ENCODE measurements at regions of chr1 and their contacts with region 1.

Region 1: DNA sequence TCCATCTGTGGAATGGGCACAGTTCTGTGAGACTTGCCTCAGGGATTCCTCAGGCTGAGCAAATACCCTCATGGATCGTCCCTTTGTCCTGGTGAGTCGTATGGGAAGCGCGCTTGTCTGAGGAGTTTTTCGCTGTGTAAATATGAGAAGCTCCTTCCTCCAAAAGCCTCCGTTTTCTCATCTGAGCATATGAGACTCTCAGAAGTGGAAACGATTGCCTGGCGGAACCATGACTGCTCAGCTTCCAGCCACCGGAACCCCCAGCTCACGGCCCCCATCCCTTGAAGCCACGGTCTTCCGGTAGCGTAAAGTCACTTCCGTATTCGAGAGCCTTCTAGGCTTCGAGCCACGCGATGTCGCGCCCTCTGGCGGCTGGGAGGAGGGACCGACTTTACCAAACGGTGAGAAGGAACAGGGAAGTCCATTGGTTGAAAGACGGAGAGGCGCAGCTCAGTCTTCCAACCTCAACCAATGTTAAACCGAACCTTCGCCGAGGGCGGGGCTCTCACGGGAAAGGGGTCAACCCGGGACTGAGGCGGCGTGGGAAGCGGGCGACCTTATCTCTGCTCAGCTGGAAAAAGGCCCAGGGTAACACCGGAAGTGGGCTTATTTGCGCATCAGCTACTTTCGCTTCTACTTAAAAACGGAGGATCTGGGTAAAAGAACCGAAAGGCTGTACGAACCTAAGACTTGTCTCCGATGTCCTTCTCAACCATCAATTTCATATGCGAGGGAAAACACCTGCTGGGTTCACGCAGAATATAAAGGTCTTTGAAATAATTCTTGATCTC is 46.2 kb downstream of the AZIN2 start:
- DNase-seq: peak; percentile 99
- ATAC-seq: peak; percentile 95
- H3K4me3 Mint-ChIP-seq: peak overlapping the region; percentile 97
- H3K27ac Mint-ChIP-seq: peak overlapping the region; percentile 98
- H3K4me1 Mint-ChIP-seq: peaks cover 40% of the 10 kb centered on the region
- H3K27me3 Mint-ChIP-seq: no peaks in the 10 kb centered on the region

Region 2: DNA sequence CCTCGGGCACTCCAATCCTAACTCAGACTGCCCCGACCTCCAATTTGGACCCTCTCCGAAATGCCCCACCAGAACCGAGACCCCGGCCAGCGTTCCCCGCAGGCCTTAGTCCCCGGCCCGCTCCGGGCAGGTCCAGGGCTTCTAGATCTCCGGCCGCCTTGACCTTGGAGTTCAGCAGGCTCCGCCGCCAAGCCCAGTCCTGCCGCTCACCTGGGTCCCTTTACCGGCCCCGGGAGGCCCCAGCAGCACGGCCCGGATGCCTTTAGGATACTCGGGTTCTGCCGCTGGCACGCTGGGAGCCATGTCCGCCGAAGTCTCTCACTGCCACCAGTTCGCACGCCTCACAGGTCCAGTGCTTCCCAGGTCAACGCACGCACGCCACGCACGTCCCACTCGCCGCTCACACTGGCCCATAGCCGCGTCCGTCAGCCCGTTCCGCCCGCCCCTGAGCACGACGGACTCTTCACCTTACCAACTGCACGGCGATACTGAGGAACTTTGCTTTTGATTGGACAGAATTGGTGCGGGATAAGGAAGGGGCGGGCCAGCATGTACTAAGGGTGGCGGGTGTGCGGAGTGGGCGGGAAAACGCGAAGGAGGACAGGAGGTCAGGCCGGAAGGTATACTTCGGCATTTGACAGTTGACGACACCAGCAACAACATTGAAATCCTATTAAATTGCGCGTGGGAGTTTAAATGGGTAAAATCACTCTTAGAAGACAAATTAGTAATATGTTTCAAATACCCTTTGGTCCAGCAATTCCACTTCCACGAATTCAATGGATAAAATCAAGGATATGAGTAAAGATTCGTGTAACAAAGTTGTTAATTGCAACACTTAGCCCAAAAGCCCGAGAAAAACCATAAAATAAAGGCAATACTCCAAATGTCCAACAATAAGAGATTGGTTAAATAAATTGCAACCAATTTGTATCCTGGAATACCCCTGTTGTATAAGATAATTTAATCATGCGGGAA is 90.4 kb before region 1 on chr1 and contains the start of gene AK2:
- CTCF ChIA-PET with region 1: no interaction called
- POLR2A ChIA-PET with region 1: interaction called, 3 read pairs
- intact Hi-C with region 1: loop called in 1 of 2 experiments (anchors 1 kb)
- DNase-seq: peak; percentile 96
- ATAC-seq: peak; percentile 100
- H3K4me3 Mint-ChIP-seq: peak within 1 kb of the TSS; percentile 96
- H3K27ac Mint-ChIP-seq: peak within 1 kb of the TSS; percentile 87
- H3K4me1 Mint-ChIP-seq: peaks cover 41% of the 10 kb centered on the region
- H3K27me3 Mint-ChIP-seq: no peaks in the 10 kb centered on the region
- total RNA-seq, gene AK2: 386 to 464 TPM

Region 3: GRCh38 chr1:33094971-33095604 is 32.1 kb before region 1 on chr1:
- CTCF ChIA-PET with region 1: interaction called, 19 read pairs
- POLR2A ChIA-PET with region 1: no interaction called
- intact Hi-C with region 1: loop called (anchors 1 kb)
- DNase-seq: peak; percentile 44
- ATAC-seq: no peak
- H3K4me3 Mint-ChIP-seq: no peak overlapping the region
- H3K27ac Mint-ChIP-seq: no peak overlapping the region
- H3K4me1 Mint-ChIP-seq: peaks cover 27% of the 10 kb centered on the region
- H3K27me3 Mint-ChIP-seq: no peaks in the 10 kb centered on the region

Region 4: DNA sequence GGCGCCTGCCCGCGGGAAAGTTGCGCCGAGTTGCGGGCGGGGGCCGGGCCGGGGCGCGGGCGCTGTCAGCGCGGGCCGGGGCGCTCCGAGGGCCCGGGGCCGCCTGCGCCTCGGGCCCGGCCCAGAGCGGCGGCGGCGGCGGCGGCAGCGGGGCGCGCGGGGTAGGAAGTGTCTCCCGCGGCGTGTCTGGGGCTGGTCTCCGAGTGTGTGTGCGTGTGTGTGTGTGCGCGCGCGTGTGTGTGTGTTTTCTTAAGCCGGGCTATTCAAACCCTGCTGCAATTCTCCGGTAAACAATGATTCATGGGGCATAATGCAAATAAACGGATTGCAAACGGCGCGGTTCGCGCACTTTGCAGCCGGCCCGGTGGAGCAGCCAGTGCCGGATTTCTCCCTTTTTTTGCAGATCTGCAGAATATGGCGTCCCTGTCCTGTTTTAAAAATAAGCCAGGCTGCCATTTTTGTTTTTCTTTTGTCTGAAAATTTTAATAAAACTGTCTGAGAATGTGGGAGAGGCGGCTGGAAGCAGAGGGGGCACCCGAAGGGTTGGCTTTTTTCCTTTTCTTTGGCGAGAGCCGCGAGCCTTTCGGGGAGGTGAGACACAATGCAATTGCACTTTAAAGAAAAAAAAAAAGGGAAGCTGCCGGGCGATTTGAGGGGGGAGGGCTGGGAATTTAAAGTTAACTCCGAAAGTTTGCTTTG is 129.7 kb after region 1 on chr1:
- CTCF ChIA-PET with region 1: interaction called, 4 read pairs
- POLR2A ChIA-PET with region 1: interaction called, 4 read pairs
- intact Hi-C with region 1: loop called (anchors 1 to 5 kb)
- DNase-seq: peak; percentile 72
- ATAC-seq: peak; percentile 50
- H3K4me3 Mint-ChIP-seq: peak overlapping the region; percentile 95
- H3K27ac Mint-ChIP-seq: peak overlapping the region; percentile 98
- H3K4me1 Mint-ChIP-seq: peaks cover 39% of the 10 kb centered on the region
- H3K27me3 Mint-ChIP-seq: no peaks in the 10 kb centered on the region

Region 5: DNA sequence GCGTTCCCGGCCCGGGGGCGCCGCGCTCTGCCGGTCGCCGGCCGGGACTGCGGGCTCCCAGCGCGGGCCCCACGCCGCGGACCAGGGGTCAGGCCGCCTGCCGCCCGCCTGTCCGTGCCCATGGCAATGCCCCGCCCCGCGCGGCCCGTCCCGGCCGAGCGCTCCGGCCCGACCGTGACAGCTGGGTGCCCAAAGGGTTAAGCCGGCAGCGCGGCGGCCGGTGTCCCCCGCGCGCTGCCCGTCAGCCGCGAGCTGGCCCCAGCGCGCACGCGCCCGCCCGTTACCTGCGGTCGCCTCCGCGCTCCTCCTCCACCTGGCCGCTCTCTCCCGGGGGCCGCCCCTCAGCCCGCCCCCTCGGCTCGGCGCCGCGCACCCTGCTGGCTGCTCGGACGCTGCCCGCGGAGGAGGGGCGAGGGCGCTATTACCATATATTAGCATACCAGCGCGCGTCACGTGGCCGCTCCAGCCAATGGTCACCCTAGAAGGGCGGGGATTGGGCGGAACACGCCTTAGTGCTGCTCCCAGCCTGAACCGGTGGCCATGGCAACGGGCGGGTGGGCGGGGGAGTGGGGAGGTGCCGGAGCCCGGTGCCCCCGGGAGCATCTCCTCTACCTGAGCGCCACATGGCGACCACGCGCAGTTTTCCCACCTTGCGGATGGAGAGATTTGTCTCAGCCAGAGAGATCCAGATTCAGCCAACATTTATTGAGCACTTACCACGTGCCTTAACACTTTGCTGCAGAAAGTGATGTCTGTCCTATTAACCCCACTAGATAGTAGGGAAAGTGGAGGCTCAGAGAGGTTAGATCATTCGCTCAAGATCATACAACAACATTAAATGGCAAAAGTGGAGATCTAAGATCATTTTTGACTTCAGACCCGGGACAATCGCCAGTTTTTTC is 303.7 kb after region 1 on chr1 and contains the start of gene PHC2:
- CTCF ChIA-PET with region 1: no interaction called
- POLR2A ChIA-PET with region 1: no interaction called
- intact Hi-C with region 1: loop called in 1 of 2 experiments (anchors 1 kb)
- DNase-seq: peak; percentile 95
- ATAC-seq: peak; percentile 99
- H3K4me3 Mint-ChIP-seq: peak within 1 kb of the TSS; percentile 58
- H3K27ac Mint-ChIP-seq: no peak within 1 kb of the TSS
- H3K4me1 Mint-ChIP-seq: peaks cover 5% of the 10 kb centered on the region
- H3K27me3 Mint-ChIP-seq: peaks cover 5% of the 10 kb centered on the region
- total RNA-seq, gene PHC2: 23.8 to 28.4 TPM

Measured in activated CD4-positive, alpha-beta T cell treated with anti-CD3 and anti-CD28 coated beads for 36 hours (primary cell).